ENCODE measurements at regions of chr6 and their contacts with region 1.

Region 1: DNA sequence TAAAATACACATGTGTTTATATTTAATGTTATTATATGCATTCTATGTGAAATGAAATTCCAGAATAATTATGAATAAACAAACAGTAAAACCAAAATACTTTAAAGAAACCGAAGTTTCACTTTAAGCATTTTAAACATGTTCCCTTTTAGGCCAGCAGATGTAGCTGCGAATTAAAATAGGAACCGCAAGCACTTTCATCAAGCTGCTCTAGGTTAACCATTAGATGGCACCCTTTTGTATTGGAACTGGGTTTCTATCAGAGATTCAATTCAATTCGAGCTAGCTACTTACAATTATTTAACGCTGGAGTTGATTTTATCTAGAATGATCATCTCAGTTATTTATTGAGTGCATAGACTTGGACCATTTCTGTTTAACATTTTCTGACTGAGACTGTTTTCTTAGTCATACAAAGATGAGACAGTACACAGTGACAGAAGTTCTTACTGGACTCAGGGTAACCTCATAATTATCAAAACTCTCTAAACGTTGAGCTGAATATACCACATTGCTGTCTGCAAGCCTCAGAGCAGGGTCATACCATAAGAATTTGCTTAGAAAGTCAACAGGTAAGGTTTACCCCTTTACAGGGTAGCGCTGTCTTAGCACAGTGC is 8.5 kb downstream of the TMEM242 start:
- DNase-seq: peak; percentile 25
- ATAC-seq: peak; percentile 84
- H3K4me3 Mint-ChIP-seq: no peak overlapping the region
- H3K27ac Mint-ChIP-seq: no peak overlapping the region
- H3K4me1 Mint-ChIP-seq: peaks cover 13% of the 10 kb centered on the region
- H3K27me3 Mint-ChIP-seq: no peaks in the 10 kb centered on the region

Region 2: GRCh38 chr6:157379656-157380454 is 65.0 kb after region 1 on chr6:
- CTCF ChIA-PET with region 1: interaction called, 7 read pairs
- POLR2A ChIA-PET with region 1: no interaction called
- intact Hi-C with region 1: loop called in 1 of 2 experiments (anchors 2 kb)
- DNase-seq: peak; percentile 93
- ATAC-seq: peak; percentile 87
- H3K4me3 Mint-ChIP-seq: peak overlapping the region; percentile 73
- H3K27ac Mint-ChIP-seq: peak overlapping the region; percentile 32
- H3K4me1 Mint-ChIP-seq: peaks cover 34% of the 10 kb centered on the region
- H3K27me3 Mint-ChIP-seq: peaks cover 8% of the 10 kb centered on the region

Region 3: GRCh38 chr6:157597446-157598312 is 282.9 kb after region 1 on chr6:
- CTCF ChIA-PET with region 1: interaction called, 8 read pairs
- POLR2A ChIA-PET with region 1: no interaction called
- intact Hi-C with region 1: loop called (anchors 1 to 2 kb)
- DNase-seq: peak; percentile 66
- ATAC-seq: peak; percentile 44
- H3K4me3 Mint-ChIP-seq: no peak overlapping the region
- H3K27ac Mint-ChIP-seq: no peak overlapping the region
- H3K4me1 Mint-ChIP-seq: no peaks in the 10 kb centered on the region
- H3K27me3 Mint-ChIP-seq: no peaks in the 10 kb centered on the region

Region 4: DNA sequence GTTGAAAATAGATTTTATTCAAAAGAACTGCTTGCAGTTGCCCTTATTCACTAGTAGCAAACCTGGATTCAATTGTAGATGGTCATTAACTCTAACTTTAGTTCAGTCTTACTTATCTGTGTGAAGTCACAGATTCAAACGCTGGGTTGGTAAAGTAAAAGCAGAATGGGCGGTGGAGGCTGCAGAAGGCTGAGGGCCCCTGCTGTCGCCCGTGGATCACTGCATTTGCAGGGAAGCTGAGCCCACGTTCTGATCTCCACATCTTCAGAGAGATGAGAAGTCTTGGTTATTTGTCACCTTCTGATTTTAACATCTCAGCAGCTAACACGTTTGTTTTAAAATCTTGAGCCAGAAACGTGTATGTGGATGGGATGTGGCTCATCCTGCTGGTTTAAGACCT is 583.4 kb after region 1 on chr6:
- CTCF ChIA-PET with region 1: no interaction called
- POLR2A ChIA-PET with region 1: interaction called, 3 read pairs
- intact Hi-C with region 1: loop called in 1 of 2 experiments (anchors 5 kb)
- DNase-seq: peak; percentile 59
- ATAC-seq: peak; percentile 82
- H3K4me3 Mint-ChIP-seq: no peak overlapping the region
- H3K27ac Mint-ChIP-seq: no peak overlapping the region
- H3K4me1 Mint-ChIP-seq: peaks cover 14% of the 10 kb centered on the region
- H3K27me3 Mint-ChIP-seq: no peaks in the 10 kb centered on the region

Region 5: DNA sequence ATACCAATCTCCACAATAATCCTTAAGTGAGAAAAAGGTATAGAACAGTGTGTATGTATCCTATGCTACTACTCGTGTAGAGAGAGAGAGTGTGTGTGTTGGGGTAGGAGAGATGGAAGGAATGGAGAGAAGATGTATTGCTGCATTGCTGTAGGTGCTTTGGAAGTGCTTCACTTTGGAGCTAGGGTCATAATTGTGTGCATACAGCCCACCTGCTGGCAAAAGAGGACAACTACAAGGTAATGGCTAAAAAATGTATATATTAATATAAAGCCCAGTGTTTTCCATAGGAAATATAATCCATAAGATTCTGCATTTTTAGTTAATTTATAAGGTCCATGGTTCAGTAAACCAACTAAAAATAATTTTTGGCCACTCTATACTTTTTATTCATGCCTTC is 817.1 kb after region 1 on chr6:
- CTCF ChIA-PET with region 1: no interaction called
- POLR2A ChIA-PET with region 1: no interaction called
- intact Hi-C with region 1: loop called in 1 of 2 experiments (anchors 2 kb)
- DNase-seq: peak; percentile 24
- ATAC-seq: peak; percentile 53
- H3K4me3 Mint-ChIP-seq: no peak overlapping the region
- H3K27ac Mint-ChIP-seq: no peak overlapping the region
- H3K4me1 Mint-ChIP-seq: no peaks in the 10 kb centered on the region
- H3K27me3 Mint-ChIP-seq: no peaks in the 10 kb centered on the region